Testis (tissue), 5 donors: ENCODE measurements at regions of chr5 and their contacts with region 1.

Region 1: GRCh38 chr5:76771705-76772405 is 47.0 kb upstream of the F2RL1 start:
- DNase-seq: no peak
- H3K4me3 ChIP-seq: no peak overlapping the region
- H3K27ac ChIP-seq: no peak overlapping the region
- H3K4me1 ChIP-seq: no peaks in the 10 kb centered on the region
- H3K27me3 ChIP-seq: no peaks in the 10 kb centered on the region
- CTCF ChIP-seq: no peak
- POLR2A ChIP-seq: no peak

Region 2: DNA sequence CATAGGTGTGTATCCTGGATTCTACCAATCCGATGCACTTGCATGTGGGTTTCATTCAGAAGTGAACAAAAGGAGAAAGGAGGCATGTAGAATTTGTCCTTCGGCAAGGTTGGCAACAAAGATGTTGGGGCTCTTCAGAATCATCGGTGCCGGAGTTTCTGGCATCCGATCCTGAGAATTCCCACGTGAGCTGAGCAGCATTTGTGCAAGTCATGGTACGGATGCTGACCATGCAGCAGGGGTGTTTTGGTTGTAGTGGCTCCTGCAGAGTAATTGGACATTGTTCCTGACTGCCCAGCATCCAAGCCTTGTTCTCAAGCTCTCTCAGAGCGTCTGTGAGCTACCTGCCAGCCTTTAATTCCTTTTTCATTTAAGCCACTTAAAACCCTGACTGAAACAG is 1035.6 kb before region 1 on chr5:
- intact Hi-C with region 1: no loop called
- DNase-seq: no peak
- H3K4me3 ChIP-seq: no peak overlapping the region
- H3K27ac ChIP-seq: no peak overlapping the region
- H3K4me1 ChIP-seq: no peaks in the 10 kb centered on the region
- H3K27me3 ChIP-seq: no peaks in the 10 kb centered on the region
- CTCF ChIP-seq: no peak
- POLR2A ChIP-seq: no peak

Region 3: GRCh38 chr5:76601470-76601869 is 170.4 kb before region 1 on chr5:
- intact Hi-C with region 1: loop called (anchors 10 kb)
- DNase-seq: peak; percentile 28
- H3K4me3 ChIP-seq: no peak overlapping the region
- H3K27ac ChIP-seq: no peak overlapping the region
- H3K4me1 ChIP-seq: no peaks in the 10 kb centered on the region
- H3K27me3 ChIP-seq: no peaks in the 10 kb centered on the region
- CTCF ChIP-seq: peak; percentile 68 to 78 (median 75)
- POLR2A ChIP-seq: no peak

Region 4: GRCh38 chr5:76893294-76893693 is 121.4 kb after region 1 on chr5:
- intact Hi-C with region 1: no loop called
- DNase-seq: no peak
- H3K4me3 ChIP-seq: no peak overlapping the region
- H3K27ac ChIP-seq: no peak overlapping the region
- H3K4me1 ChIP-seq: no peaks in the 10 kb centered on the region
- H3K27me3 ChIP-seq: no peaks in the 10 kb centered on the region
- CTCF ChIP-seq: no peak
- POLR2A ChIP-seq: no peak